ENCODE measurements at regions of chr9 and their contacts with region 1.

Region 1: DNA sequence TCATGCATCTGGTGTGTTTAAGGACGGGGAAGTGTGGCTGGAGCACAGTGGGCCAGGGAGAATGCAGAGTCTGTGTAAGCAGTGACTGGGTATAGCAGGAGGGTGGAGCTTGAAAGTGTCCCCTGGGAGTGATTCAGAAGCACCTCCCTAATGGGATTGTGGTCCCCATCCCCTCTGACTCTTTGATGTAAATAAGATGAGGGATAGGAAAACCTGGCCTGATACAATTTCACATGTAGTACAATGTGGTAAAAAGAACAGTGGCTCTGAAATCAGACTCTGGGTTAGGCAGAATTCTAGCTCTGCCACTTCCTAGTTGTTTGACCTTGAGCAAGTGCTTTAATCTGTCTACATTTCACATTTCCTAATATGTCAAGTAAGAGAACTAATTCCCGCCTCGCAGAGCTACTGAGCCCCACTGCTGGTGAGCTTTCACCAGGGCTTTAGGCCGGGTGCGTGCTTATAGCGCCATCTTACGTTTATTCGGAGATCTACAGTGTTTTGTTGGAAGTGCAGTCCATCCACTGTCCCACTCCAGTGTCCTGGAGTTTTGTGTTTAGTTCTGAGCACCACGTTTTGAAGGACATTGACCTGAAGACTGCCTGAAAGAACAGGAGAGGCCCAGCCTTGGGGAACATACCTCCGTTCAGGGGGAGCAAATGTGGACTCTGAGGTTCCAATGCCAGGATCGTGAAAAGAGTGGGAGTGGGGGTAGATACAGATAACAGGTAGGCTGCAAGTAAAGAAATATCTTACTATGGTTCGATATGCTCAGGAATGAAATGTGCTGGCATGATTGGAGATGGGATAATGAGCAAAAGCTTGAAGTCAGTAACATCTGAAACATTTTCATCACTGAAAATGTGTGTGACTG is 51.2 kb upstream of the TESK1 start:
- DNase-seq: peak; percentile 63
- ATAC-seq: peak; percentile 93
- H3K4me3 ChIP-seq: no peak overlapping the region
- H3K27ac ChIP-seq: no peak overlapping the region
- H3K4me1 ChIP-seq: peaks cover 11% of the 10 kb centered on the region
- H3K27me3 ChIP-seq: no peaks in the 10 kb centered on the region
- CTCF ChIP-seq: peak; percentile 95
- EP300 ChIP-seq: no peak
- POLR2A ChIP-seq: no peak
- RAD21 ChIP-seq: peak; percentile 93

Region 2: GRCh38 chr9:35193762-35194161 is 360.1 kb before region 1 on chr9:
- CTCF ChIA-PET with region 1: no interaction called
- POLR2A ChIA-PET with region 1: no interaction called
- in situ Hi-C with region 1: no loop called
- intact Hi-C with region 1: loop called (anchors 10 kb)
- DNase-seq: peak; percentile 64
- ATAC-seq: peak; percentile 52
- H3K4me3 ChIP-seq: no peak overlapping the region
- H3K27ac ChIP-seq: peak overlapping the region; percentile 33
- H3K4me1 ChIP-seq: peaks cover 11% of the 10 kb centered on the region
- H3K27me3 ChIP-seq: no peaks in the 10 kb centered on the region
- CTCF ChIP-seq: peak; percentile 90
- EP300 ChIP-seq: no peak
- POLR2A ChIP-seq: no peak
- RAD21 ChIP-seq: peak; percentile 54

Region 3: GRCh38 chr9:35481347-35481975 is 72.4 kb before region 1 on chr9:
- CTCF ChIA-PET with region 1: interaction called, 41 read pairs
- POLR2A ChIA-PET with region 1: no interaction called
- in situ Hi-C with region 1: loop called (anchors 5 kb)
- intact Hi-C with region 1: loop called (anchors 1 kb)
- DNase-seq: peak; percentile 54
- ATAC-seq: peak; percentile 75
- H3K4me3 ChIP-seq: no peak overlapping the region
- H3K27ac ChIP-seq: no peak overlapping the region
- H3K4me1 ChIP-seq: peaks cover 7% of the 10 kb centered on the region; the same call in 1 of the 2 replicates
- H3K27me3 ChIP-seq: no peaks in the 10 kb centered on the region
- CTCF ChIP-seq: peak; percentile 79
- EP300 ChIP-seq: no peak
- POLR2A ChIP-seq: no peak
- RAD21 ChIP-seq: peak; percentile 64; the same call in 1 of the 2 replicates

Region 4: GRCh38 chr9:35489313-35490154 is 64.4 kb before region 1 on chr9 and contains the start of gene RUSC2:
- CTCF ChIA-PET with region 1: interaction called, 26 read pairs
- POLR2A ChIA-PET with region 1: interaction called, 3 read pairs
- in situ Hi-C with region 1: loop called (anchors 5 kb)
- intact Hi-C with region 1: loop called (anchors 2 kb)
- DNase-seq: peak; percentile 75
- ATAC-seq: peak; percentile 84
- H3K4me3 ChIP-seq: peak within 1 kb of the TSS; percentile 76 to 97 (median 87)
- H3K27ac ChIP-seq: peak within 1 kb of the TSS; percentile 71
- H3K4me1 ChIP-seq: peaks cover 30% of the 10 kb centered on the region
- H3K27me3 ChIP-seq: no peaks in the 10 kb centered on the region
- CTCF ChIP-seq: peak; percentile 77
- EP300 ChIP-seq: peak; percentile 3 to 26; a peak in 1 of 4 replicates
- POLR2A ChIP-seq: peak; percentile 61 to 71
- RAD21 ChIP-seq: peak; percentile 46; the same call in 1 of the 2 replicates
- total RNA-seq, gene RUSC2: 2.3 and 3.3 TPM in 2 replicates

Region 5: DNA sequence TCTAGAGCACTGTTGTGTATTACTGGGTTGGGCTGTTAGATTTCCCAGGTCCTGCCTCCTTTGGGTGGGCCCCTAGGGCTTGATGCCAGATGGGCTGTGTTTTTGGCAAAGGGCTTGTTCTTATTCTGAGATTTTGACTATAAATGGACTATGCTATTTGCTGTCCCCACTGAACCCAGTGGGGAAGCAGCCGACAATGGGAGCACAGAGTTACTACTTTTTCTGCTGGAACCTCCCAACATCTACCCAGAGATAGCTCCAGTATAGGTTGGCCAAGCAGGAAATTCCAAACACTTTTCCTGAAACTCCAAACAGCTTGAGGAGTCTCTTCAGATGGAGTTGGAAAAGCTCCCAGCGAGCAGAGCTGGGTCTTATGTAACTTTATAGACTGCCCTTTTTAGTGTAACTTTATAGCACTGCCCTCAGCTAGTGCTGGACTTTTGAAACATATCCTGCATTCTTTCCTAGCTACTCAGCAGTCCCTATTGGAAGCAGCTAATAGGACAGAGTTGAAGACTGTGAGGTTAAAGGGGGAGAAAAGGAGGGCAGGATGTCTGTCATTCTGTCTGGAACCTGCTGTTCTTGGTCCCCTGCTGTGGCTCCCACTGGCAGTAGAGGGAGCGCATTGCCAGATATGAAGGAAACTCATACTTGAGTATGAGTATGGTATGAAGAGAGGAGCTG is 43.0 kb before region 1 on chr9:
- CTCF ChIA-PET with region 1: interaction called, 3 read pairs
- POLR2A ChIA-PET with region 1: interaction called, 3 read pairs
- in situ Hi-C with region 1: no loop called
- intact Hi-C with region 1: loop called (anchors 1 kb)
- DNase-seq: peak; percentile 88
- ATAC-seq: peak; percentile 99
- H3K4me3 ChIP-seq: peak overlapping the region in 2 of 3 experiments; percentile 2 to 28; a peak in 1 of 6 replicates
- H3K27ac ChIP-seq: peak overlapping the region; percentile 47
- H3K4me1 ChIP-seq: peaks cover 18% of the 10 kb centered on the region
- H3K27me3 ChIP-seq: no peaks in the 10 kb centered on the region
- CTCF ChIP-seq: peak; percentile 64
- EP300 ChIP-seq: peak in 1 of 2 experiments; percentile 44; a peak in 1 of 4 replicates
- POLR2A ChIP-seq: no peak
- RAD21 ChIP-seq: peak; percentile 42; the same call in 1 of the 2 replicates

Measured in HepG2 (cell line).